CD4-positive, alpha-beta memory T cell (primary cell): ENCODE measurements at regions of chr5 and their contacts with region 1.

Region 1: DNA sequence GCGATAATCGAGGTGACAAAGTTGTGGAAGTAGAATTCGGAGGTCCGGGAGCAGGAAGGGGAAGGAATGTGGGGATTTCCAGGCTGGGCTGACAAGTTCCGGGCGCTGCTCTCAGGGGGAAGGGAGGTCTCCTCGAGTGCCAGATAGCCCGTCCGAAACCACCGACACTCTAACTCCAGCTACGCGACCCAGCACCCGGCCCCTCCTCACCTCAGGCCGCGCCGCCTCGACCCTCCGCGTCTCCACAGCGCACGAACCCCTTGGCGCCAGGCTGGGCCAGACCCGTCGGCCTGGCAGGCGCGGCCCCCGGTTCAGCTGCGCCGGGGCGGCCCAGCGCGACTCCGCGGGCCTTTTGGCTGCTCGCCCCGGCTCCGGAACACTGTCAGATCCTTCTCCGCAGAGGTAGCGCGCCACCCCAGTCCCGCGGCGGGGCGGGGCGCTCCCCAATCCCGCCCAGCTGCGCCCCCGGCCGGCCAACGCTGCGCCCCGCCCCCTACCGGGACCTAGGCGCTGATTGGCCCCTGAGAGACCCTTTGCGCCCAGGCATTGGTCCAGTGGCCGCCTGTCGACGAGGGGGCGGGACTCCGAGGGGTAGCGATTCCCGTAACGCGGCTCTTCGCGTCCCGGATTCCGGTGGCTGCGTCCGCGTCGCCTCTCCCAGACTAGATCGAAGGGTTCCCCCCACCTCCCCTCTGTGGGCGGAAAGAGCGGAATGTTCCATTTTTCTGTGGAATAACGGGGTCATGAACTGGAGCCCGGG is at the start of gene IL6ST:
- DNase-seq: peak; percentile 93 to 95 (median 95)
- H3K4me3 ChIP-seq: peak within 1 kb of the TSS; percentile 91 to 97
- H3K4me3 Mint-ChIP-seq: peak within 1 kb of the TSS; percentile 95 to 100 (median 98)
- H3K27ac ChIP-seq: peak within 1 kb of the TSS; percentile 95
- H3K27ac Mint-ChIP-seq: peak within 1 kb of the TSS; percentile 93 to 100 (median 99)
- H3K4me1 ChIP-seq: peaks cover 42% of the 10 kb centered on the region
- H3K4me1 Mint-ChIP-seq: peaks cover 34 to 76% (median 44%) of the 10 kb centered on the region in 4 donors
- H3K27me3 ChIP-seq: no peaks in the 10 kb centered on the region
- H3K27me3 Mint-ChIP-seq: no peaks in the 10 kb centered on the region
- total RNA-seq, gene IL6ST: 176 to 180 TPM

Region 2: DNA sequence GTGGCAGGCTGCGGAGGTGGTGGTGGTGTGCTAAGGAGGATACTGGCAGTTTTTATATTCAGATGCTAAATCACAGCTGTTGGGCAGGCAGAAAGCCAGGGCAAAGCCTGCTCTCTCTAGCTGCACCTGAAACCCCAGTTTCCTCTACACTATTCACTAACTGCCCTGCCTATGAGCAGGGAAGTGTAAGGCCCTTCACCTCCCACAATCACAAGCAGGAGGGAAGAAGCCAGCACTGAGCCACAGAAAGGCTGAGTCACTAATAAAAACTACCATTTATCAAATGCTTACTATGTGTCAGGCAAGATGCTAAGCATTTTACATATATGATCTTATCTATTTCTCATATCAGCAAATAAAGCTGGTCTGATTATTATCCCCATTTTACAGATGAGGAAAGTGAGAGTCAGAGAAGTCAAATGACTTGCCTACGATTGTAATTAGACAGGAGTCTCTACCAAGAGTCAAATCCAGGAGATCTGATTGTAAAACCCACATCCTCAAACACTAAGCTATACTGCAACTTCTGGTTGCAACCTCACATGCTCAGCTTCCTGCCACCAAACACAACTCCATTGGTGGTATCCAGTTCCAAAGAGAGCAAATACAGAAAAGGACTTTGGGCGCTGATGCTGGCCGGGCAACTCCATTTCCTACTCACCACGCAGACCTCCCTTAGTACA is 17.7 kb after region 1 on chr5:
- CTCF ChIA-PET with region 1: interaction called, 5 read pairs
- POLR2A ChIA-PET with region 1: interaction called, 58 read pairs
- intact Hi-C with region 1: loop called (anchors 1 kb)
- DNase-seq: peak; percentile 59 to 77 (median 63)
- H3K4me3 ChIP-seq: peak overlapping the region in 1 of 2 donors; percentile 20
- H3K4me3 Mint-ChIP-seq: peak overlapping the region; percentile 8 to 82 (median 57)
- H3K27ac ChIP-seq: peak overlapping the region; percentile 12
- H3K27ac Mint-ChIP-seq: peak overlapping the region; percentile 73 to 85 (median 83)
- H3K4me1 ChIP-seq: peaks cover 30% of the 10 kb centered on the region
- H3K4me1 Mint-ChIP-seq: peaks cover 25 to 50% (median 31%) of the 10 kb centered on the region in 4 donors
- H3K27me3 ChIP-seq: no peaks in the 10 kb centered on the region
- H3K27me3 Mint-ChIP-seq: no peaks in the 10 kb centered on the region

Region 3: GRCh38 chr5:56056875-56057274 is 62.1 kb after region 1 on chr5:
- CTCF ChIA-PET with region 1: interaction called, 5 read pairs
- POLR2A ChIA-PET with region 1: interaction called, 27 read pairs
- intact Hi-C with region 1: loop called (anchors 2 kb)
- DNase-seq: no peak
- H3K4me3 ChIP-seq: no peak overlapping the region
- H3K4me3 Mint-ChIP-seq: peak overlapping the region in 7 of 8 donors; percentile 39 to 76 (median 63)
- H3K27ac ChIP-seq: no peak overlapping the region
- H3K27ac Mint-ChIP-seq: peak overlapping the region; percentile 39 to 92 (median 80)
- H3K4me1 ChIP-seq: peaks cover 80% of the 10 kb centered on the region
- H3K4me1 Mint-ChIP-seq: peaks cover 46 to 82% (median 65%) of the 10 kb centered on the region in 4 donors
- H3K27me3 ChIP-seq: no peaks in the 10 kb centered on the region
- H3K27me3 Mint-ChIP-seq: no peaks in the 10 kb centered on the region

Region 4: DNA sequence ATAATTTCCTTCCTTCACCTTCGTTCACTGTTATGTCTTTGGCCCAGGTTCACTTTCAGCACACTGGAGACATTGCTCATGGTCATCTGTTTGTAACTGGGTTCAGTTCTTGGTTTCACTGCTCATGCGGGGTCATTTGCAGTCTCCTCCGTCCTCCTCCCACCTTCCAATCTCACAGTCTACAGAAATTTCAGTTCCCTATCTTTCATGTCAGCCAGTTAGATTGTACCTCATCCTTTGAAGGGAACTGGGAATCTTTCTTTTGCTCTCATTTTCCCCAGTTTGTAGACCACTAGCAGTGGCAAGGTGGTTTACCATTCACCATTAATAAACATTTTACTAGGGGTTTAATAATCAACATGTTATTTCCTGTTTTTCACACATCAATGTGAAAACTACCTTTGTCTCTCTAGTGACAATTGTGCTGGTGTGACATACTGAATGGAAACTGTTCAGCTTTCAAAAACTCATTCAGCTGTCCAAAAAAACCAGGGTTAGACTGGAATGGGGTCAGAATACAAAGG is 100.9 kb after region 1 on chr5:
- CTCF ChIA-PET with region 1: interaction called, 4 read pairs
- POLR2A ChIA-PET with region 1: interaction called, 32 read pairs
- intact Hi-C with region 1: loop called (anchors 2 kb)
- DNase-seq: no peak
- H3K4me3 ChIP-seq: no peak overlapping the region
- H3K4me3 Mint-ChIP-seq: peak overlapping the region in 6 of 8 donors; percentile 1 to 84 (median 12)
- H3K27ac ChIP-seq: no peak overlapping the region
- H3K27ac Mint-ChIP-seq: peak overlapping the region; percentile 23 to 91 (median 73)
- H3K4me1 ChIP-seq: peaks cover 87% of the 10 kb centered on the region
- H3K4me1 Mint-ChIP-seq: peaks cover 55 to 80% (median 66%) of the 10 kb centered on the region in 4 donors
- H3K27me3 ChIP-seq: no peaks in the 10 kb centered on the region
- H3K27me3 Mint-ChIP-seq: no peaks in the 10 kb centered on the region

Region 5: DNA sequence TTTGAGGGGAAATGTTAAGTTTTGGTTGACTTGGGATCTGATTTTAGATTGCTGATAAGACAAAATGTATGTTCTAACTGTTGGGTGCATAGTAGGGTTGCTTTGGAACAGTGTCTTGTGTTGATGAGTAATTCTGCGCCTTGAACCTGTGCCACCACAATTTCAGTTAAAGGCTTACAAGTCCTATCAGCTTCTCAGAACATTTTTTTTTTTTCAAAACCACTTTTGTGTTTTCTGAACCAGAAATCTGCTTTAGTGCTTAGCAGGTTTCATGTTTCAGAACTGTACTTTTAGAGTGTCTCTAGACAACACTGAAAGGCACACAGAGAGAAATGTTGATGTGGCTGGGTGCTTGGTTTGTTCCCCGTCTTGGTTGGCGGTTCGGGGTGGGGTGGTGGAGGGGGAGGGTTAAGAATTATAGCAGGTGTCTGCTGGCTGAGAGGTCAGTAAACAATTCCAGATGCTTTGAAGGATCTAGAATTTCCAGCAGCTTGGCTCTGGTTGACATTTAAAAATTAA is 153.8 kb after region 1 on chr5:
- CTCF ChIA-PET with region 1: no interaction called
- POLR2A ChIA-PET with region 1: interaction called, 8 read pairs
- intact Hi-C with region 1: loop called (anchors 5 kb)
- DNase-seq: peak in 4 of 5 donors; percentile 42 to 51 (median 46)
- H3K4me3 ChIP-seq: no peak overlapping the region
- H3K4me3 Mint-ChIP-seq: peak overlapping the region in 7 of 8 donors; percentile 16 to 67 (median 57)
- H3K27ac ChIP-seq: no peak overlapping the region
- H3K27ac Mint-ChIP-seq: peak overlapping the region; percentile 73 to 94 (median 81)
- H3K4me1 ChIP-seq: peaks cover 80% of the 10 kb centered on the region
- H3K4me1 Mint-ChIP-seq: peaks cover 45 to 63% (median 48%) of the 10 kb centered on the region in 4 donors
- H3K27me3 ChIP-seq: no peaks in the 10 kb centered on the region
- H3K27me3 Mint-ChIP-seq: no peaks in the 10 kb centered on the region

Region 6: GRCh38 chr5:57042524-57042931 is 1047.8 kb after region 1 on chr5:
- CTCF ChIA-PET with region 1: no interaction called
- POLR2A ChIA-PET with region 1: no interaction called
- intact Hi-C with region 1: no loop called
- DNase-seq: no peak
- H3K4me3 ChIP-seq: no peak overlapping the region
- H3K4me3 Mint-ChIP-seq: no peak overlapping the region
- H3K27ac ChIP-seq: no peak overlapping the region
- H3K27ac Mint-ChIP-seq: no peak overlapping the region
- H3K4me1 ChIP-seq: no peaks in the 10 kb centered on the region
- H3K4me1 Mint-ChIP-seq: no peaks in the 10 kb centered on the region
- H3K27me3 ChIP-seq: no peaks in the 10 kb centered on the region
- H3K27me3 Mint-ChIP-seq: peaks cover 0 to 5% of the 10 kb centered on the region in 2 donors

Region 7: GRCh38 chr5:57173185-57174127 is 1178.7 kb after region 1 on chr5 and contains the start of gene GPBP1:
- CTCF ChIA-PET with region 1: no interaction called
- POLR2A ChIA-PET with region 1: interaction called, 14 read pairs
- intact Hi-C with region 1: loop called (anchors 5 kb)
- DNase-seq: peak; percentile 98 to 99 (median 99)
- H3K4me3 ChIP-seq: peak within 1 kb of the TSS; percentile 70 to 87
- H3K4me3 Mint-ChIP-seq: peak within 1 kb of the TSS; percentile 96 to 99 (median 98)
- H3K27ac ChIP-seq: peak within 1 kb of the TSS; percentile 99
- H3K27ac Mint-ChIP-seq: peak within 1 kb of the TSS; percentile 98 to 100 (median 99)
- H3K4me1 ChIP-seq: peaks cover 37% of the 10 kb centered on the region
- H3K4me1 Mint-ChIP-seq: peaks cover 14 to 53% (median 25%) of the 10 kb centered on the region in 4 donors
- H3K27me3 ChIP-seq: no peaks in the 10 kb centered on the region
- H3K27me3 Mint-ChIP-seq: no peaks in the 10 kb centered on the region
- total RNA-seq, gene GPBP1: 136 to 137 TPM